GM23248 (cell line): ENCODE measurements at regions of chr1 and their contacts with region 1.

Region 1: GRCh38 chr1:156797212-156797871 is 19.3 kb downstream of the SH2D2A start:
- DNase-seq: peak; percentile 69
- H3K4me3 ChIP-seq: no peak overlapping the region
- H3K27ac ChIP-seq: no peak overlapping the region
- H3K4me1 ChIP-seq: peaks cover 35% of the 10 kb centered on the region
- H3K27me3 ChIP-seq: no peaks in the 10 kb centered on the region

Region 2: DNA sequence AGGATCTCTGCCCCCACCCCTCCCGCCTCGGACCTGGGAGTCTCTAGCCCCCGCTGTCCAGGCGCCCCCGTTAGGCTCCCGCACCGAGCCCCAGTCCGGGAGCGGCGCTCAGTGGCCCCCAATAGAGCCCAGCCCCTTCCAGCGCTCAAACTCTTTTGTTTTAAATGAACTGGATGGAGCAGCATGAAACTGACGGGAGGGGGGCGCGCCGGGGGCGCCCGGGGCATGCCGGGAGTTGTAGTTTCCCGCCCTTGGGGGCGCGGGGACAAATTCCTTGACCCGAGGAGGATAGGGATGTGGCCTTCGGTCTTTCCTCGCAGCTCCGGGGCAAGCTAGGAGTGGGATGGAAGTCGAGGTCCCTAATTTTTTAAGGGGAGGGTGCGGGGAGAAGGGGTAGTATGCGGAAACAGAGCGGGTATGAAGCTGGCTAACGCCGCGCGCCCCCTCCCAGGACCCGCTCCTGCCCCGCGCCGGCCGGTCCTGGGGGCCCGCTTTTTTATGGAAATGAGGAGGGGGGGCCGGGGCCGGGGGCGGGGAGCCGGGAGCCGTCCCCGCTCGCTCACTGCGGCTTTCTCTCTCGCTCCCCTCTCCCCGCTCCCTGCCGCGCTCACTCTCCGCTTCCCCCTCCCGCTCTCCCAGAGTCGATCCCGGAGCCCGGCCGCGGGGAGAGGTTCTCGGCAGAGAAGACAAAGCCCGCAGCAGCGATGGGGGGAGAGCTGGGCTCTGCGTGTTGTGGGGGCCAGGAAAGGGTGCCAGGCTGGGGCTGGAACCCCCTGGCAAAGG is 714.8 kb before region 1 on chr1 and contains the start of gene MEX3A:
- in situ Hi-C with region 1: no loop called
- DNase-seq: peak; percentile 84
- H3K4me3 ChIP-seq: peak within 1 kb of the TSS; percentile 88
- H3K27ac ChIP-seq: no peak within 1 kb of the TSS
- H3K4me1 ChIP-seq: no peaks in the 10 kb centered on the region
- H3K27me3 ChIP-seq: no peaks in the 10 kb centered on the region
- total RNA-seq, gene MEX3A: 0.13 and 0.22 TPM in 2 replicates

Region 3: GRCh38 chr1:156889802-156890585 is 92.7 kb after region 1 on chr1:
- in situ Hi-C with region 1: loop called (anchors 10 kb)
- DNase-seq: peak; percentile 88
- H3K4me3 ChIP-seq: no peak overlapping the region
- H3K27ac ChIP-seq: no peak overlapping the region
- H3K4me1 ChIP-seq: no peaks in the 10 kb centered on the region
- H3K27me3 ChIP-seq: no peaks in the 10 kb centered on the region

Region 4: DNA sequence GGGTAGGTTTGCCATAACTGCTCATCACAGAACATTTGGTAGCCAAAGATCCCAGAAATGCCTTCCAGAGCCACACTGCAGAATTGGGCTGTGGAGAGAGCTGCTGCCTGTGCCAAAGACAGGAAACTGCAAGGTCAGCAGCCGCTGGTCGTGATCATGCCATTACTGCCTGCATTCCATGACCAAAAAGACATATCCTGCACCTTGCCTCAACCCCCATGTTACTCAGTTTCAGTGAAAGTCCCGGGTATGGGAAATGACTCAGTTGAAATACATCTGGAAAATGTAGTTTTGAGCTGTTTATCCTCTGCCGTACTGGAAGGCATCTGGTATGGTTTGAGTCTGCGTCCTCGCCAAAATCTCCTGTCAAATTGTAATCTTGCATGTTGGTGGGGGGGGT is 593.3 kb after region 1 on chr1:
- in situ Hi-C with region 1: no loop called
- DNase-seq: peak; percentile 75
- H3K4me3 ChIP-seq: no peak overlapping the region
- H3K27ac ChIP-seq: no peak overlapping the region
- H3K4me1 ChIP-seq: peaks cover 11% of the 10 kb centered on the region
- H3K27me3 ChIP-seq: no peaks in the 10 kb centered on the region